Stomach (tissue), 19 donors: ENCODE measurements at regions of chr9 and their contacts with region 1.

Region 1: GRCh38 chr9:113463418-113464285 is at the start of gene RGS3:
- DNase-seq: peak; percentile 84 to 94
- H3K4me3 ChIP-seq: peak within 1 kb of the TSS; percentile 47 to 63 (median 52)
- H3K27ac ChIP-seq: peak within 1 kb of the TSS; percentile 69 to 85 (median 83)
- H3K4me1 ChIP-seq: peaks cover 0 to 35% (median 28%) of the 10 kb centered on the region in 4 donors
- H3K27me3 ChIP-seq: no peaks in the 10 kb centered on the region
- CTCF ChIP-seq: peak in 2 of 7 experiments; percentile 11 to 19
- EP300 ChIP-seq: no peak
- POLR2A ChIP-seq: no peak
- total RNA-seq, gene RGS3: 27.0 to 71.4 (median 49.2) TPM

Region 2: GRCh38 chr9:113578882-113579282 is 115.2 kb after region 1 on chr9:
- intact Hi-C with region 1: loop called (anchors 10 kb)
- DNase-seq: peak; percentile 73 to 78
- H3K4me3 ChIP-seq: no peak overlapping the region
- H3K27ac ChIP-seq: peak overlapping the region; percentile 88 to 91 (median 91)
- H3K4me1 ChIP-seq: peaks cover 52 to 89% (median 61%) of the 10 kb centered on the region in 4 donors
- H3K27me3 ChIP-seq: no peaks in the 10 kb centered on the region
- CTCF ChIP-seq: no peak
- EP300 ChIP-seq: no peak
- POLR2A ChIP-seq: no peak

Region 3: DNA sequence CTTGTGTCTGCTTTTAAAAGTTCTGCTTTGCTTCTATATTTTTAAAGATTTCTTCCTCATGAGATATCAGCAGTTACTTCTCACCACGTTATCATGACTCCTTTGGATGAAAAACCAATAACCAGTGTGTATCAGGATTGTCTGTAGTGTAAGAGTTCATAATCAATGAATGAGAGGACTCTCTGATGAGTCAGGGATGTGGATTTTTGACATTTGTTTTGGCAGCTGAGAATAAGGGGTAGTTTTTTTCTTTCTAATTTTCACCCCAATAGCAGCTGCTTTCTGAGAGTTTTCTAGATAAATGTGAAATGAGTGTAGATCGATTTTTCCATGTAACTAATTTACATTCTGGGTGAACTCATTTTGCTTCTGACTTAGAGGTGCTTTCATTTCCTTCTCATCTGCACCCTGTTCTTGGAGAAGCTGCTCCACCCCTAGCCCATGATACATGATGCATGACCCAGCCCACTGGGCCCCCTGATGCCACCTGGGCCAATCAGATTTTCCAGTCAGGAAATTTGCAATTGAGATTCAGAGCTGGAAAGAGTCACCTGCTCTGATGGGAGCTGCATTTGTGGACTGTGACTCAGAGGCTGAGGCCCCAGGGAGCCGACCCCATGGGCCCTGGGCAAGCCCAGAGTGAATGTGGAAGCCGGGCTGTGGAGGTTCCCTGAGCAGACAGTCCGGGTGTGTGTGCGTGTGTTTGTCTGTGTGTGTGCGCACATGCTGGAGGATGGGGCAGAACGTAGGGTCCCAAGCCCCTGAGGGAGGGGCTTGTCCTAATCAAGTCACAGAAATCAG is 159.1 kb after region 1 on chr9:
- intact Hi-C with region 1: no loop called
- DNase-seq: peak in 1 of 2 donors; percentile 90
- H3K4me3 ChIP-seq: no peak overlapping the region
- H3K27ac ChIP-seq: peak overlapping the region in 3 of 5 donors; percentile 8 to 79 (median 22)
- H3K4me1 ChIP-seq: peaks cover 26 to 45% (median 34%) of the 10 kb centered on the region in 4 donors
- H3K27me3 ChIP-seq: no peaks in the 10 kb centered on the region
- CTCF ChIP-seq: no peak
- EP300 ChIP-seq: no peak
- POLR2A ChIP-seq: no peak